Cardiac septum (tissue), 1 donor: ENCODE measurements at regions of chr4 and their contacts with region 1.

Region 1: DNA sequence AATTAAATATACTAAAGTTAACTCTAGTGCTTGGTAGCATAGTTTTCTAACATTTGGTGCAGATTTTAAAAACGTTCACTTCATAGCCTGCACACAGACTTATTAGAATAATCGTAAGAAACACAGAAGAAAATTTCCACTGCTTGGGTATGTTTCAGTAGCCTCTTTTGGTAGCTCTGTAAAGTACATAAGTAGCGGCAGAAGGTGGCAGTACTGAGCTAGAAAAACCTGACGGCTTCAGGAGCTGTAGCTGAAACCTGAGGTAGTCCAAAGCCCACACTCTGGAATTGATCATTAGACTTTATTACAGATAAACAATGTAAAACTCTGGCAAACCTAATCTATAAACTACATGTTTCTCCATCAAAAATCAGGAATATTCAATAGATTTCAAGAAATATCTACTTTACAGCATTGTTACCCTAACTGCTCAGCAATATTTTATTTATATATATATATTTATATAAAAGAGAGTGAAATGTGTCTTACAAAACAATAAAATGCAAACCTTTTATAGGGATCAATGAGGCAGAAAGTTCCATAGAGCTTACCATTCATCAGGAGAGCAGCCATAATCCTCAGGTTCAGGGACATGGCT is 88.2 kb downstream of the ATP8A1 start:
- DNase-seq: no peak

Region 2: GRCh38 chr4:42656944-42657792 is 88.5 kb after region 1 on chr4 and contains the start of gene ATP8A1:
- intact Hi-C with region 1: loop called (anchors 5 kb)
- DNase-seq: peak; percentile 96
- total RNA-seq, gene ATP8A1: 22.1 TPM

Region 3: GRCh38 chr4:42747971-42748370 is 179.3 kb after region 1 on chr4:
- intact Hi-C with region 1: loop called (anchors 2 kb)
- DNase-seq: no peak

Region 4: DNA sequence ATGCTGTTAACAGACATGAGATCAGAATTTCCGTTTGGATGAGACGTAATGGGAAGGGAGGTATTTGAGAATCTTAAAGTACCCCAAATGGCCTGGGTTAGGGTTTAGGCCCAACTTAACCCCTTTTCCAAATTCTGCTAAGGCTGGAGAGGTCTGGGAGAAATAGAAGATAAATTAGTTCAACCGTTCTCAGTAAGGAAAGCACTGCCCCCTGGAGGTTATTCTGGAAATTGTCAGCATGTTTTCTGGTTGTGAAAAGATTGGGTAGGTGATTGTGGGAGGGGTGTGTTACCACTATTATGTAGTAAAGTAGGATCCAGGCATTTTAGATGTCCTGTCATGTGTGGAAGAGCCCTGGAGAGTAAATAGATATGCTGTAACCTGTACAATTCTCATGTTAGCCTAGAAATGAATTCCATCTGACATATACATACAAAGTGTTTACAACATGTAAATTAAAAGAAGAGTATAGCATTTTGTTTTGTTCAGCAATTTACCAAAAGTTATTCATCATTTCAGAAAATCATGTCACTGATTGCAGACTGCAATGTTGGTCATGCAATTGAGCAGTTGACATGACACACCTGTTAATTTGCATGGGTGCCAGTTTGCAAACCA is 297.0 kb after region 1 on chr4:
- intact Hi-C with region 1: loop called (anchors 2 kb)
- DNase-seq: no peak

Region 5: GRCh38 chr4:42878863-42879262 is 310.2 kb after region 1 on chr4:
- intact Hi-C with region 1: no loop called
- DNase-seq: no peak